ENCODE measurements at regions of chr18 and their contacts with region 1.

Region 1: GRCh38 chr18:31129398-31130115 is 27.3 kb upstream of the DSC2 start:
- DNase-seq: no peak
- ATAC-seq: no peak

Region 2: GRCh38 chr18:31079973-31080372 is 49.6 kb before region 1 on chr18:
- intact Hi-C with region 1: loop called in 1 of 2 experiments (anchors 10 kb)
- DNase-seq: no peak
- ATAC-seq: no peak